Dendritic cell treated with granulocyte-macrophage colony-stimulating factor and Interleukin-4, amounts not matched to agents 40 ng/mL and 50 ng/mL, for 4 days (primary cell): ENCODE measurements at regions of chr21 and their contacts with region 1.

Region 1: GRCh38 chr21:29164325-29164942 is 34.0 kb downstream of the MAP3K7CL start:
- H3K4me3 Mint-ChIP-seq: no peak overlapping the region
- H3K27ac Mint-ChIP-seq: peak overlapping the region; percentile 96
- H3K4me1 Mint-ChIP-seq: peaks cover 56% of the 10 kb centered on the region
- H3K27me3 Mint-ChIP-seq: no peaks in the 10 kb centered on the region

Region 2: GRCh38 chr21:29091032-29091431 is 73.4 kb before region 1 on chr21:
- intact Hi-C with region 1: loop called (anchors 5 kb)
- H3K4me3 Mint-ChIP-seq: no peak overlapping the region
- H3K27ac Mint-ChIP-seq: no peak overlapping the region
- H3K4me1 Mint-ChIP-seq: peaks cover 41% of the 10 kb centered on the region
- H3K27me3 Mint-ChIP-seq: no peaks in the 10 kb centered on the region

Region 3: GRCh38 chr21:29130270-29130969 is 34.0 kb before region 1 on chr21 and contains the start of gene MAP3K7CL:
- intact Hi-C with region 1: no loop called
- H3K4me3 Mint-ChIP-seq: no peak within 1 kb of the TSS
- H3K27ac Mint-ChIP-seq: no peak within 1 kb of the TSS
- H3K4me1 Mint-ChIP-seq: peaks cover 5% of the 10 kb centered on the region
- H3K27me3 Mint-ChIP-seq: no peaks in the 10 kb centered on the region